Activated CD4-positive, alpha-beta T cell treated with anti-CD3 and anti-CD28 coated beads for 36 hours (primary cell): ENCODE measurements at regions of chrX and their contacts with region 1.

Region 1: DNA sequence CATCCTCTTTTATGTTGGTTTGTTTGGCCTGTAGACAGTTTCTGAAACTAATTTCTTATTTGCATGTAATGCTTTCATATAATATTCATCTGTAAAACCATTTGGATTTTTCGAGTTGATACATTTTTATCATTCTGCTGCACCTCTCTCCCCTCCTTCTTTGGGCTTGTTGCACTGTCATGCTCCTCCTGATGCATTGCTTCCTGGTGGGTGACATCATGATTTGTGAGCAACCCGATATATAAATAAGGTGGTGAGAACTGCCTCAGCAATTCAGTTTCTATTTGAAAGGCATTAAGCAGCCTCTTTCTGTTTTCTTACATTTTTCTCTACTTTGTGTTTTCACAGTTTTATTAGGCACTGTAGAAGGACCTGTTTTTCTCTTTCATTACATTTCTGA is 515.7 kb downstream of the RPA4 start:
- DNase-seq: peak; percentile 25
- ATAC-seq: peak; percentile 18
- H3K4me3 Mint-ChIP-seq: no peak overlapping the region
- H3K27ac Mint-ChIP-seq: peak overlapping the region; percentile 65
- H3K4me1 Mint-ChIP-seq: peaks cover 50% of the 10 kb centered on the region
- H3K27me3 Mint-ChIP-seq: no peaks in the 10 kb centered on the region

Region 2: GRCh38 chrX:96684339-96685209 is 714.8 kb before region 1 on chrX and contains the start of gene DIAPH2:
- CTCF ChIA-PET with region 1: no interaction called
- POLR2A ChIA-PET with region 1: no interaction called
- intact Hi-C with region 1: loop called in 1 of 2 experiments (anchors 2 kb)
- DNase-seq: peak; percentile 85
- ATAC-seq: peak; percentile 72
- H3K4me3 Mint-ChIP-seq: peak within 1 kb of the TSS; percentile 88
- H3K27ac Mint-ChIP-seq: peak within 1 kb of the TSS; percentile 94
- H3K4me1 Mint-ChIP-seq: peaks cover 29% of the 10 kb centered on the region
- H3K27me3 Mint-ChIP-seq: no peaks in the 10 kb centered on the region
- total RNA-seq, gene DIAPH2: 9.1 to 12.4 TPM

Region 3: DNA sequence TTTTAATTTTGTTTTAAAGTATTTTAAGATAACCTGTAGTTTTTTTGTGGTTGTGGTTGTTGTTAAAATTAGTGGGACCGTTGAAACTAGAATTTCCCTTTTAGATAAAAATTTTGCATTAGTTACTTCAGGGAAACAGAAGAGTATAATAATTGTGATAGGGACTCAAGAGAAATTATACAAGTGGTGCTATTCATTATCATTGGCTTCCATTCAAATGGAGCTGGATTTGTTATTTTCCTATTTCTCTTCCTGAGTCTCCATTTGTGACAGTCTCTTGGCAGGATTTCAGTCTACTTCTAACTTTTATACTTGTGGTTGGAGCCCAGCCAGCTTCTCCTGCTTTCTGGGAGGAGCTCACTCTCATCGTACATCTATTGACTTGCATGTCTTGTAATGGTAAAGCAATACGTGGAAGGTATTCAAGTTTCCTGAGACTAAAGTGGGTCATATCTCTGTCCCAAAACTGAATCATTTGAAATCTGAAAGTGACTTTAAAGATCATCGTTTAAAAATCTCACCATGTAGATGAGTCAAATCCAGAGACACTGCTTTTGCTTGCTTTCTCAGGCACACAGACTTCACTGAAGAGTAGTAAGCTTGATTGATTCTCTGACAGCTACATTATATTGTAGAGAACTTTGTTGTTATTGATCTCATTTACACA is 359.9 kb before region 1 on chrX:
- CTCF ChIA-PET with region 1: no interaction called
- POLR2A ChIA-PET with region 1: no interaction called
- intact Hi-C with region 1: loop called (anchors 5 kb)
- DNase-seq: peak; percentile 30
- ATAC-seq: peak; percentile 93
- H3K4me3 Mint-ChIP-seq: no peak overlapping the region
- H3K27ac Mint-ChIP-seq: no peak overlapping the region
- H3K4me1 Mint-ChIP-seq: peaks cover 8% of the 10 kb centered on the region
- H3K27me3 Mint-ChIP-seq: no peaks in the 10 kb centered on the region

Region 4: DNA sequence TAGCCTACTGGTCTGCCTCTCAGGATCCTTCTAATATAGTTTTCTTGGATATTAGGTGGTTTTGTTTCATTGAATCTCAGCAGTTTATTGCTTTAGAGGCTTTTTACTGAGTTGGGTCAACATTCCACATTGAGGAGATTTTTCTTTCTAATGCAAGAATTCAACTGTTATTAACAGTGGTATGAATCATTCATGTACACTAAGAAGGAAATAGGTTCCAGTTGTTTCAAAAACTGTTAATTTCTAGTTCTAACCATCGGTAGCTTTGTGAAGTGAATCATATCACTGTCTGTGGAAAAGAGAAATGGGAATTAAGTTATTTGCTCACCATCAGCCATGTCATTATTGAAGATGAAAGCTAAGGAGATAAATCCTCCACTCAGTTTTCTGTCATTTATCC is 184.2 kb before region 1 on chrX:
- CTCF ChIA-PET with region 1: no interaction called
- POLR2A ChIA-PET with region 1: no interaction called
- intact Hi-C with region 1: loop called in 1 of 2 experiments (anchors 5 kb)
- DNase-seq: no peak
- ATAC-seq: no peak
- H3K4me3 Mint-ChIP-seq: no peak overlapping the region
- H3K27ac Mint-ChIP-seq: no peak overlapping the region
- H3K4me1 Mint-ChIP-seq: peaks cover 3% of the 10 kb centered on the region
- H3K27me3 Mint-ChIP-seq: no peaks in the 10 kb centered on the region

Region 5: DNA sequence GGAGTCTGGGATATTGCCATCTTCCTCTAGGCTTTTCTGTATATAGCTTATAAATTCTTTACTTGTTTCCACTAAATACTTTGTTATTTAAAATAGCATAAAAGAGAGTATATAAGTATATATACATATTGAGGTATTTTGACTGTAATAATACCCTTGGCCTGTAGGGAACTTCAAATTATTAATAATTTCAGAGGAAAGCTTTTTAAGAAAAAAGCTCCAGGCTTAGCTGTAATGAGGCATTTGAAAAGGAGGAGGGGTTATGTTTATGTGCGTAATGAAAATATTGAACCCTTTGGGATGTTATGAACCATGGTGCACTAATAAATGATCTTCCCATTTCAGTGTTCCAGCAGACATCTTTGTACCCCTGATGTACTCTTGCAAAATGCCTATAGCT is 62.4 kb after region 1 on chrX:
- CTCF ChIA-PET with region 1: no interaction called
- POLR2A ChIA-PET with region 1: no interaction called
- intact Hi-C with region 1: no loop called
- DNase-seq: no peak
- ATAC-seq: no peak
- H3K4me3 Mint-ChIP-seq: no peak overlapping the region
- H3K27ac Mint-ChIP-seq: no peak overlapping the region
- H3K4me1 Mint-ChIP-seq: no peaks in the 10 kb centered on the region
- H3K27me3 Mint-ChIP-seq: no peaks in the 10 kb centered on the region

Region 6: DNA sequence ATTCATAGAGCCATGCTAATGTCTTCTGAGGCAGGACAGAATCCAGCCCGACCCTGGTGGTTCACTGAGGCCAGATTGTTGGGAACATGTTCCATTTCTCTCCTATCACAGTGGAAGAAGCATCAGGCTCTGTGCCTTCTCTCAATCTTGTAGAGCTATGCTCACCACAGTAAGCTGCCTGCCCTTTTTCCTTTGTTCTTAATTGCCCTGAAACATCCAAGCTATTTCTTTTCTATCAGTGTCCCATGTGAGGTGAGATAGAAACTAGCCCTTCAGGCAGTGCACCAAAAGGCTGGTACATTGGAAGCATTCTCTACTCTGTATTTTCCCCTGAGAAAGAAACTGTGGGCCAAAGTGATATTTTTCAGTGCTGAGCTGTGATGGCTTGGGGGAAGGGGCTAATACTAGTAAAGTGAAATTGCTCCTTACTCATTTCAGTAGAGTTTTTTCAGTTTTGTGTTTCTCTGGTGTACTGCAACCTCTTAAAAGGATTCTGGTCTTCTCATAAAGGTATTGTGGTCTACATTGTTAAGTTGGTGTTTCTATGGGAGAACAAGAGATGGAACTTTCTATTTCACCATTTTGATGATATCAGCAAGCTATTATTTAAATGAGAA is 95.5 kb after region 1 on chrX:
- CTCF ChIA-PET with region 1: no interaction called
- POLR2A ChIA-PET with region 1: interaction called, 3 read pairs
- intact Hi-C with region 1: loop called in 1 of 2 experiments (anchors 2 kb)
- DNase-seq: no peak
- ATAC-seq: peak; percentile 66
- H3K4me3 Mint-ChIP-seq: no peak overlapping the region
- H3K27ac Mint-ChIP-seq: no peak overlapping the region
- H3K4me1 Mint-ChIP-seq: peaks cover 10% of the 10 kb centered on the region
- H3K27me3 Mint-ChIP-seq: no peaks in the 10 kb centered on the region

Region 7: DNA sequence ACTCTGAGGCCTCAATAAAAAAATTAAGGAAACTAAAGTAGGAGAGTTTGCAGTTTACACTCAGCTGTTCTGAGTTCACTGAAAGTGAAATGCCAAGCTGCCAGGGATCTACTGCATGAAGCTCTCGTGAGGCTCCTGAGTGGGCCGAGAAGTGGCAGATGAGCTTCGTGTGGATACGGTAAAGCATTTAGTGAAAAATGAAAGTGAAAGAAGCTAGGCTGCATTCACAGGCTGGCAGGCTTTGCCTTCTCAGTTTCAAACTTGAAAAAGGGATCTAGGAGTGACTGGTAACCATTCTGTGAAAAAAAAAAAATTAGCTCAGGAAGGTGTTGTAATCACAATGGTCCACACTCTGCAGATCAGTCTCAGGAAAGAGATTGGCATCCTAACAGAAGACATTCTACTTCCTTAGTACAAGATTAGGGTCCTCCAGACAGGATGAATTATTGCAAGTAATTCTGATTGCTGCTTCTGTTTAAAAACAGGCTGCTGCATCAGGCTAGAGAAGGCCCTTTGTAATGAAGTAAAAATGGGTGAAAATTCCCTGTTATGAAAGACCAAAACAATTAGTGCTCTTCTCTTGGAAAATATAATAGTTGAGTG is 164.2 kb after region 1 on chrX:
- CTCF ChIA-PET with region 1: no interaction called
- POLR2A ChIA-PET with region 1: interaction called, 3 read pairs
- intact Hi-C with region 1: loop called in 1 of 2 experiments (anchors 10 kb)
- DNase-seq: peak; percentile 61
- ATAC-seq: peak; percentile 98
- H3K4me3 Mint-ChIP-seq: peak overlapping the region; percentile 59
- H3K27ac Mint-ChIP-seq: peak overlapping the region; percentile 79
- H3K4me1 Mint-ChIP-seq: peaks cover 10% of the 10 kb centered on the region
- H3K27me3 Mint-ChIP-seq: no peaks in the 10 kb centered on the region